Transverse colon (tissue), 4 donors: ENCODE measurements at regions of chr10 and their contacts with region 1.

Region 1: DNA sequence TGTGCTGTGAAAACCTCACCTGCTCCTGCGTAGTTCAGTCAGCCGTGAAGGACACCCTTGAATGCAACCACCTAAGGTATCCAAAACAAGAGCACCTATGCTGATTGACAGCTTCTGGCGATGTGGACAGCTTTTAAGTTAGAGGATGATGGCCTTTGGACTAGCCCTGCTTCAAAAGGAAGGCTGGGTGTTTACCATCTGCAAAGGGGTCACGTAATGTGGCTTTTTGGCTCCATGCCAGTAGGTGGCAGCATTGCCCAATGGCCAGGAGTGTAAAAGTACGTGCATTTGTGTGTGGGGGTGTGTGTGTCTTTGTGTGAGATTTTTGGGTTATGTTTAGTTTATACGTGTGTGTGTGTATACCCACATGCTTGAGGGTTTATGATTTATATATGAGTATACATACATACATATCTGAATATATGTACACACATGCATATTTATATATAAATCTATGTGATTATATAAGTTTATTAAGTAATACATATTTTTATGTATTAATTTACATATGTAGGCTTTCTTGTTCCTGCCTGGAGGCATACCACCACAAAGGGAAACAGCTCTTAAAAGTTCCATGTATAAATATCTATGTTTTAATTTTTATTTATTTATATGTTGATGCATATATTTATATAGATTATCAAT is 236.3 kb upstream of the ANKRD30A start:
- DNase-seq: peak; percentile 13
- H3K4me3 ChIP-seq: no peak overlapping the region
- H3K27ac ChIP-seq: no peak overlapping the region
- H3K4me1 ChIP-seq: no peaks in the 10 kb centered on the region
- H3K27me3 ChIP-seq: no peaks in the 10 kb centered on the region
- CTCF ChIP-seq: no peak
- EP300 ChIP-seq: no peak
- POLR2A ChIP-seq: no peak

Region 2: GRCh38 chr10:35613597-35614226 is 1275.3 kb before region 1 on chr10:
- in situ Hi-C with region 1: loop called in 1 of 4 experiments (anchors 25 kb)
- intact Hi-C with region 1: no loop called
- DNase-seq: no peak
- H3K4me3 ChIP-seq: no peak overlapping the region
- H3K27ac ChIP-seq: no peak overlapping the region
- H3K4me1 ChIP-seq: no peaks in the 10 kb centered on the region
- H3K27me3 ChIP-seq: peaks cover 12% of the 10 kb centered on the region
- CTCF ChIP-seq: no peak
- EP300 ChIP-seq: no peak
- POLR2A ChIP-seq: no peak

Region 3: DNA sequence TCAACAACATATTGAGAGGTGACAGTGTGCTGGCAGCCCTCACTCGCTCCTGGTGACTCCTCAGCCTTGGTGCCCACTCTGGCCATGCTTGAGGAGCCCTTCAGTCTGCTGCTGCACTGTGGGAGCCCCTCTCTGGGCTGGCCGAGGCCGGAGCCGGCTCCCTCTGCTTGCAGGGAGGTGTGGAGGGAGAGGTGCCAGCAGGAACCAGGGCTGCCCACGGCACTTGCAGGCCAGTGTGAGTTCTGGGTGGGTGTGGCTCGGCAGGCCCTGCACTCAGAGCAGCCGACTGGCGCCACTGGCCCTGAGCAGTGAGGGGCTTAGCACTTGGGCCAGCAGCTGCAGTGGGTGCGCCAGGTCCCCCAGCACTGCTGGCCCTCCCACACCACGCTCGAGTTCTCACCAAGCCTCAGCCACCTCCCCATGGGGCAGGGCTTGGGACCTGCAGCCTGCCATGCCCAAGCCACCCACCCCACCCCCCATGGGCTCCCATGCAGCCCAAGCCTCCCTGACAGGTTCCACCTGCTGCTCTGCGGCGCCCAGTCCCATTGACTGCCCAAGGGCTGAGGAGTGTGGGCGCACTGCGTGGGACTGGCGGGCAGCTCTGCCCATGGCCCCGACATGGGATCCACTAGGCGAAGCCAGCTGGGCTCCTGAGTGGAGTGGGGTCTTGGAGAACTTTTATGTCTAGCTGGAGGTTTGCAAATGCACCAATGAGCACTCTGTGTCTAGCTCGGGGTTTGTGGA is 140.8 kb before region 1 on chr10:
- in situ Hi-C with region 1: no loop called
- intact Hi-C with region 1: no loop called
- DNase-seq: no peak
- H3K4me3 ChIP-seq: no peak overlapping the region
- H3K27ac ChIP-seq: no peak overlapping the region
- H3K4me1 ChIP-seq: no peaks in the 10 kb centered on the region
- H3K27me3 ChIP-seq: no peaks in the 10 kb centered on the region
- CTCF ChIP-seq: no peak
- EP300 ChIP-seq: no peak
- POLR2A ChIP-seq: no peak